ENCODE measurements at regions of chr13 and their contacts with region 1.

Region 1: DNA sequence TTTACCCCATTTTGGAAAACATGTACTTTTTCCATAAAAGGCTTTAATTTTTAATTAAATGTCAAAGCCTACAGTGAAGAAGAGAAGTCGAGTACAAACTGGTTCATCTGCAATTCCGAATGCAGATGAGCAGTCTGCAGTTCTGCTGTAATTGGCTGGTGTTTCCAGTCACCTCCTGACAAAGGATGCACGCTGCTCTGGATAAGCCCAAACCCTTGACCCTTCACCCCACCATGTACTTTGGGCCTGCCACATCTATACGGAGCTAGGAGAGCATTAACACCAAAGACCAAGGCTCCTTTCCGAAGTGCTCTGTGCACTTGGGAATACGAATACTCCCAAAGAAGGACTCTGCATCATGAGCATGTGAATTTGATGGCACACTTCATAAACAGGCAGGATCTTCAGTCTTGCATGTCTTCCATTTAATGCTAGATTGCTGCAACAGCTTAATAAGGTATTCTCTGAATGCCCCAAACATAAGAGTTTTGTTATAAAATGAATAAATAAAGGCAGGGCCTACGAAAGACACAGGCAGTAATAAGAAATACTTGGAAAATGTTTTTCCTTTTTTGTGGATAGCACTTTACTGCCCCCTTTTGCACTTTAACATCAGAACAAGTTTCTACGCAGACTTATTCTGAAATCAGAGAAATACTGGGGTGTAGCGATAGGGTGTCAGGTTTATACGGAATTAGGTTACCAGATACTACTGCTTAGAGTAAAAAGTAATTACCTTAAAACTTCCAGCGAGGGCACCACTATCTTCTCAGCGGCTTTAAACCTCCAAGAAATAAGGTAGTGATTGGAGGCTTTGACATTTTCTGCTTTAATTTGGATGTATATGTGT is 15.0 kb downstream of the EFNB2 start:
- DNase-seq: no peak
- ATAC-seq: no peak
- H3K4me3 ChIP-seq: no peak overlapping the region
- H3K27ac ChIP-seq: no peak overlapping the region
- H3K4me1 ChIP-seq: peaks cover 5% of the 10 kb centered on the region
- H3K27me3 ChIP-seq: no peaks in the 10 kb centered on the region
- CTCF ChIP-seq: peak in 5 of 7 experiments; percentile 13 to 52 (median 35)
- POLR2A ChIP-seq: no peak

Region 2: GRCh38 chr13:105406551-105406950 is 1113.9 kb before region 1 on chr13:
- intact Hi-C with region 1: loop called (anchors 10 kb)
- DNase-seq: no peak
- ATAC-seq: no peak
- H3K4me3 ChIP-seq: no peak overlapping the region
- H3K27ac ChIP-seq: no peak overlapping the region
- H3K4me1 ChIP-seq: no peaks in the 10 kb centered on the region
- H3K27me3 ChIP-seq: no peaks in the 10 kb centered on the region
- CTCF ChIP-seq: no peak
- POLR2A ChIP-seq: no peak

Region 3: DNA sequence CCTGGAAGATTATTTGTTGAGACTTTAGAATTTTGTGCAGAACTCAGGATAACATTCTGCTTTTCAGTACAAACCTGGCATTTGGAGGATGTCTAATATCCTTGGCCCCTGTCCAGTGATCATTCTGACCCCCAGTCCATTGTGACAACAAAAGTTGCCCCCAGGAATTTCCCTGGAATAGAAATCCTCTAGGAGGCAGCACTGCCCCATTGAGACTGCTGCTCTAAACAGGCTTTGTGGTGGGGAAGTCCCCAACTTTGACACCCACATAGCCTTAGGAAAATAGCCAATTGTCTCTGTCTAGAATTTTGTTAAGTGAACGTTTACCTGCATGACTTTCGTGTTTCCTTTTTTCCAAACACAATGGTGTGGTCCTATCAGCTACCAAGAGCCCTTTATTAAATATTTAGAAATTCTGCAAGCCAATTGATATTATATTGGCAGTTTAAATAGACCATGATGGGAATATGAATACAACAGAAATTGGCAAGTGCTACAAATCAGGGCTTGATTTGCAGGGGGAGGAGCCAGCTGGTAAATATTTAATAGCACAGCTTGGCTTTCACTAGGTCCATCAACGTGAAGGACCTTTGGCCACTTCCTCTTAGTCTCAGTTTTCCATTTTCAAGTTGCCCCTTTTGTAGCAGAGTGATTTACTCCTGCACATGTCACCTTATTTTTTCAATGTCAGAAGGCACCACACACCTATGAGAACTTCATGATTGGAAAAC is 436.6 kb before region 1 on chr13:
- intact Hi-C with region 1: loop called (anchors 10 kb)
- DNase-seq: peak; percentile 25 to 56 (median 44)
- ATAC-seq: peak; percentile 79
- H3K4me3 ChIP-seq: no peak overlapping the region
- H3K27ac ChIP-seq: no peak overlapping the region
- H3K4me1 ChIP-seq: peaks cover 9% of the 10 kb centered on the region
- H3K27me3 ChIP-seq: no peaks in the 10 kb centered on the region
- CTCF ChIP-seq: peak; percentile 43 to 71 (median 65)
- POLR2A ChIP-seq: no peak

Region 4: DNA sequence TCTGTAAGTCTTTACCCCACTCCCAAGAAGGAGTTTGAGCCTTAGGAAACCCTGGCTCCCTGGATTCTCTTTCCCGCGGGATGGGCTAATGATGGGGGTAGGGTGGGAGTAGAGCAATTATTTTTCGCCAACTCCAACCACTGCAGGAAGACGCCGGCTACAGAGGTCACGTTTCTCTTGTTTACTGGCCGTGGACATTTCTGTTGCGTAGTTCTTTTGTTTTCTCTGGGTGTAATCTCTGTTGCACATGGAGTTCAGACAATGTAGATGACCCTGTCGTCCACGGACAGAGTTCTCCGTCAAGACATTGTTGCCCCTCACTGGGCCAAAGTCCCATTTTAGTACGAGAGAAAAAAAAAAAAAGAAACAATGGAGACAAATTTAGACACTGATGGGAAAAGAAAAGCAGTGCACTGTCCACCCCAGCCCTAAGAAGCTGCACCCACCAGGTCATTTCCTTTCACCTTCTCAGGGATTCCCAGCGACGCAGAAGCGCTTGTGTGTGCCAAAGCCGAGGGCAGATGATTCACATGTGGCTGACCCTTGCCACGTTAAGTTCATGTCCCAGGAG is 181.4 kb after region 1 on chr13:
- intact Hi-C with region 1: no loop called
- DNase-seq: peak in 1 of 4 donors; percentile 4
- ATAC-seq: peak; percentile 73
- H3K4me3 ChIP-seq: no peak overlapping the region
- H3K27ac ChIP-seq: no peak overlapping the region
- H3K4me1 ChIP-seq: no peaks in the 10 kb centered on the region
- H3K27me3 ChIP-seq: no peaks in the 10 kb centered on the region
- CTCF ChIP-seq: no peak
- POLR2A ChIP-seq: no peak